ENCODE measurements at regions of chr2 and their contacts with region 1.

Region 1: GRCh38 chr2:70124983-70125480 is 37.8 kb downstream of the PCBP1 start:
- DNase-seq: peak; percentile 51

Region 2: GRCh38 chr2:70104231-70105111 is 20.6 kb before region 1 on chr2:
- CTCF ChIA-PET with region 1: interaction called, 4 read pairs
- POLR2A ChIA-PET with region 1: interaction called, 41 read pairs
- DNase-seq: peak; percentile 59

Region 3: DNA sequence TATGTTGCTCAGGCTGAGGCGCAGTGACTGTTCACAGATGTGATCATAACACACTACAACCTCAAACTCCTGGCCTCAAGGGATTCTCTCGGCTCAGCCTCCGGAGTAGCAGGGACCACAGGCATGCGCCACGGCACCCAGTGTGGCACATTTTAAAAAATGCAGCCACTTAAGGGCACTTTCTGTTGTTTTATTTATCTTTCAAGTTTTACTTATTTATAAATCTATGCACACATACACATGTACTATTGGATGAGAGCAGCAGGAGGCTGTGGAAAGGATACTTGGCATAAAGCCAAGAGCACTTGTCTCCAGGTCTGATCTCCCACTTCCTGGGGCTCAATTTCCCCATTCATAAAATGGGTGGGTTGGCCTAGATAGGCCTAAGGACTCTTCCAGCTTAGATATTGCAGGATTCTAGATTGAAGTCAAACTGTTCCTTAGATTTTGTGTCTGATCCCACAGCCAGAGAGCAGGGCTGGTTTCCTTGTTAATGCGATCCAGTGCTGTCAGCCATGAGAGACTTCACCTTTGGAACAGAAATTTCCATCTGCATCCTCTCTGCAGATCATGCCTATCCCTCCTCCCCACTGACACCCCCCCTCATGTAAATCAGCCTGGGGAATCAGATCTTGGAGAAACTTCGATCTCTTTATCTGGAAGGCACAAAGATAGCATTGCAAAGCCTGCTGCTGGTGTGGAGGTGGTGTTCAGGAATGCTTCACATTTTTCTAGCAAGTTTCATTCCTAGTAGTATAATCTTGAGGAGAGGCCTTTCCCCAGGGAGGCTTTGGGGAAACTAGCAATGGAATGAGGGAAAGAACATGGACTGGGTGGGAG is 13.1 kb before region 1 on chr2:
- CTCF ChIA-PET with region 1: interaction called, 4 read pairs
- POLR2A ChIA-PET with region 1: interaction called, 41 read pairs
- DNase-seq: no peak

Region 4: DNA sequence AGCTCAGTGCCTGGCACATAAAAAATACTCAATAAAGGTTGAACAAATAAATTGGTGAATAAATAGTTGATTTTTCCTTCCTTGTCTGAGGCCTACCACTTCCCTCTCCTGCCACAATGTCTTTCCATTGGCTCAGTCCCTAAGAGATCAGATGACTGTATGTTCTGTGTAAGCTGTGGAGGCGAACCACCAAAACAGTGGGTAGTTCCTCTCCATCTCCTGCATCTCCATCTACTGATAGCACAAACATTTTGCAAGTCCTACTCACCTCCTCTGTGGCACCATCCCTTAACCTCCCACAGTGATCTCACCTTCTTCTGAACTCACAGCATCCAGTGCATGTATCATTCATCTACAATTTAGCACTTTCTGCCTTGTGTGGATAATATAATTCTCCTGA is 12.5 kb after region 1 on chr2:
- CTCF ChIA-PET with region 1: no interaction called
- POLR2A ChIA-PET with region 1: interaction called, 85 read pairs
- DNase-seq: no peak

Region 5: DNA sequence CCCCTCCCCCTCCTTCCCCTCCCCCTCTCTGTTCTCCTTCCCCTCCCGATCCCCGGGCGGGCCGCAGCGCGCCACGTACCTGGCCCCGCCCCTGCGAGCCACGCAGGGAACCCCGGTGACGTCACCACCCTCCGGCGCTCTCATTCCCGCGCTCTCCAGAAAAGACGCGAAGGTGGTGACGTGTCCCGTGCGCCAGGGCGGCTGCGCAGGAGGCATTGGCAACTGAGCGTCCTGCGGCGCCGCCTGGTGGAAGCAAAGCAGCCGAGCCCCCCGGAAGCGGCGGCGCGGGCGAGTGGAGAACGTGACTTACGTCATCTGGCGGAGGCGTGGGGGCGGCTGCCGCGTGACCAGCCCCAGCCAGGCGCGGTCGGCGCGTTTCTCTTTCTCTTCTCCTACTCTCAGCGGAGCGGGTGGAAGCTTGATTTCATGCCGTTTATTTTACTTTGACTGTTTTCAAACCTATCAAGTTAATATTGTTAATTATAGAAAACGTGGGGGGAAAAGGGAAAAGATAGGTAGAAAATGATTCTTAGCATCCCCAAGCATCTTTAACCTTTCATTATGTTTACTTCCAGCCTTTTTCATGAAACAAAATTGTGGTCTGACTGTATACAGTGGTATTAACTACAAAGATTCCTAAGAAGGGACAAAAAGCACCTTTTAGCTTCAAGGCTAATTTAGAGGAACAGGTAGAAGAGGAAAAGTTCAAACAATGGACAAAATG is 17.7 kb after region 1 on chr2:
- CTCF ChIA-PET with region 1: no interaction called
- POLR2A ChIA-PET with region 1: interaction called, 22 read pairs
- DNase-seq: peak; percentile 98

Region 6: DNA sequence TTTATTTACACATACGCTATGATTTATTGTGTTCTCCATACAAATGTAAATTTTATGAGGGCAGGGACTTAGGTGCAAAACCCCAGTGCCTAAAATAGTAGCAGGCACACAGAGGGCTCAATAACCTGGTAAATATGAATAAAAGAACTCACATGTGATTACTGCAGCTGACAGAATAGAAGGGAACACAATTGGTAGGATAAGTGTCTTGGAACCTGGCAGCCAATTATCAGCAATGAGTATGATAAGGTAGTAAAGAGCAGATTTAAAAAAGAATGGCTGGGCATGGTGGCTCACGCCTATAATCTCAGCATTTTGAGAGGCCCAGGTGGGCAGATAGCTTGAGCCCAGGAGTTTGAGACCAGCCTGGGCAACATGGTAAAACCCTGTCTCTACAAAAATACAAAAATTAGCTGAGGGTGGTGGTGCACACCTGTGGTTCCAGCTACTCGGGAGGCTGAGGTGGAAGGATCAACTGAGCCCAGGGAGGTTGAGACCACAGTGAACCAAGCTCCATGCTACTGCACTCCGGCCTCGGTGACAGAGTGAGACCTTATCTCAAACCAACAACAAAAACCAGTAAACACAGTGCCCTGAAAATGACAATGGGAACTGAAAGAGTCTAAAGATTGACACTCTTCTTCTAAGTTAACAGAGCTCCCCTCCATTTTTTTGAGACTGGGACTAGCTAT is 158.6 kb after region 1 on chr2:
- CTCF ChIA-PET with region 1: no interaction called
- POLR2A ChIA-PET with region 1: no interaction called
- DNase-seq: no peak

Region 7: GRCh38 chr2:70541481-70542020 is 416.5 kb after region 1 on chr2:
- CTCF ChIA-PET with region 1: no interaction called
- POLR2A ChIA-PET with region 1: no interaction called
- DNase-seq: peak; percentile 3